Gastrocnemius medialis (tissue), 4 donors: ENCODE measurements at regions of chr6 and their contacts with region 1.

Region 1: GRCh38 chr6:170265655-170266054 is 25.2 kb downstream of the DLL1 start:
- DNase-seq: peak; percentile 80 to 87
- ATAC-seq: peak; percentile 83 to 87
- H3K4me3 ChIP-seq: peak overlapping the region in 3 of 4 donors; percentile 11 to 32 (median 21)
- H3K27ac ChIP-seq: peak overlapping the region; percentile 64 to 70 (median 68)
- H3K4me1 ChIP-seq: peaks cover 8 to 18% of the 10 kb centered on the region in 2 donors
- H3K27me3 ChIP-seq: no peaks in the 10 kb centered on the region
- CTCF ChIP-seq: peak in 3 of 5 experiments; percentile 18 to 36 (median 34)
- POLR2A ChIP-seq: peak; percentile 34 to 62

Region 2: GRCh38 chr6:170039156-170040107 is 226.2 kb before region 1 on chr6:
- in situ Hi-C with region 1: no loop called
- intact Hi-C with region 1: loop called (anchors 5 kb)
- DNase-seq: peak in 1 of 2 donors; percentile 3
- ATAC-seq: no peak
- H3K4me3 ChIP-seq: no peak overlapping the region
- H3K27ac ChIP-seq: no peak overlapping the region
- H3K4me1 ChIP-seq: peaks cover 16 to 30% of the 10 kb centered on the region in 2 donors
- H3K27me3 ChIP-seq: no peaks in the 10 kb centered on the region
- CTCF ChIP-seq: no peak
- POLR2A ChIP-seq: no peak

Region 3: DNA sequence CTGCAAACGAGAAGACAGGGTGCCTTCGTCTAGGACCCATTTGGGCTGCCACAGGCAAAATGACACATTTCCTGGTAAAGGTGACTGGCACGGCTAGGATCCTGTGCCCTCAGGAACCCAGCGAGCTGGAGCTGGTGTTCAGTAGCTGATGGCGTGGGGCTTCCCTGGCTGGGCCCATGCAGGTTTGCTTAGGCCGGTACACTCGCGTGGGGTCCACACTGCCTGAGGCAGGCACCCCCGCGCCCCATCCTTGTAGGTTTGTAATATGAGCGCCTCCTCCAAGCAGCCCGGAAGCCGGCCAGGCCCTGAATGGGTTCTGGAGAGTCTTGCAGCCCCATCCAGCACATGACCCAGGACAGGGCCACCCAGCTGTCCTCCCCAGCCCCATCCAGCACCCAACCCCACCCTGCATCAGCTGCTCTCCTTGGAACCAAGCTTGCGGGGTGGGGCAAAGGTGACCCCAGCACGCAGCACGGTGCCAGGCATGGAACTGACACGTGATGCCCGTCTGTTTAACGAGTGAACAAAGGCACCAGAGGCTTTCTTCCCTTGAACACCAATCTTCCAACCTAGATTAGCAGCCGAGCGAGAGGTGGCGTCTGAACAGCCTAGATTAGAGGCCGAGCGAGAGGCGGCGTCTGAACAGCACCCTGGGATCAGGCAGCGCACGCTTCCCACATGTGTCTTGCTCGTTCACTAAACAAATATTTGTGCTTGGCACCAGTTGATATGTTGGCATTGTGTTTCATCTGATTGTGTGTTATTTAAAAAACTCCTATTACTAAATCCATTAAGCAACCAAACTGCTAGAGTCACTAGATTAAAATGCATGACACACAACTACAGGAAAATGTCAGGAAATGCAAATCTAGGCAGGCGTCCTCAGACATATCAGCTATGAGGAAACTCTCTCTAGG is 86.8 kb before region 1 on chr6:
- in situ Hi-C with region 1: no loop called
- intact Hi-C with region 1: loop called (anchors 5 kb)
- DNase-seq: peak; percentile 75 to 82
- ATAC-seq: peak; percentile 67 to 81
- H3K4me3 ChIP-seq: no peak overlapping the region
- H3K27ac ChIP-seq: peak overlapping the region; percentile 28 to 77 (median 60)
- H3K4me1 ChIP-seq: peaks cover 23 to 26% of the 10 kb centered on the region in 2 donors
- H3K27me3 ChIP-seq: no peaks in the 10 kb centered on the region
- CTCF ChIP-seq: no peak
- POLR2A ChIP-seq: no peak

Region 4: DNA sequence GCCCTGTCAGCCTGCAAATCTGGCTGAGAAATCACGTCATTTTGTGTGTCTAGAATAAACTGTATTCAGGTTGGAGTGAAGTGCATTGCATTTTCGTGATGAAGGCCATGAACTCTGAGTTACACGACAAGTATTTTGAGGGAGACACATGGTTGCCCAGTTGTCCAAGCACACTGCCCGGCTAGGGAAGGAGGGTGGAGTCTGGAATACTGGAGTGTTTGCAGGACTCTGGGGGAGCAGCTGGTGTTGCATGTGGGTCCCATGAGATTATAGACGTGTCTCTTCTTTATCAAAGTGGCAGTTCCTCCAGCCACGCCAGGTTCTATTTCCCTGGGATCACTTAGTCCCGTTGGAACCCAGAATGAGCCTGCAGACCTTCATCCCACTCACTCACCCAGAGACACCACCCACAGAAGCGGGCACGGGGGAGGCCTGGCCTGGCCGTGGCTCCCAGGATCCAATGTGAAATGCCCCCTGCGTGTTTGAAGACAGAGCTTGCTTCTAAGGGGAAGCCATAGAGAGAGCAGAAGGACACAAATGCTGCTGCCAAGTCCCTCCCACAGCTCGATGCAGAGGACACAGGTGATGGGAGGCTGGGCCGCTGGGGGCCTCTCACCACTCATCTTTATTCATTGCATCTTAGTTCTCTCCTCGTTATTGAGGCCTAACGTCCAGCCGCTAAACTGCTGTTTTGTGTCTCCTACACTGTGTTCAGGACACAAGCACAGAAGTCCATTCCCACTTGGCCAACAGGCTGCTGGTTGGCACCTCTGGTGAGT is 34.7 kb before region 1 on chr6:
- in situ Hi-C with region 1: no loop called
- intact Hi-C with region 1: loop called (anchors 1 kb)
- DNase-seq: no peak
- ATAC-seq: peak; percentile 20 to 45
- H3K4me3 ChIP-seq: peak overlapping the region in 1 of 4 donors; percentile 25
- H3K27ac ChIP-seq: peak overlapping the region in 2 of 4 donors; percentile 23 to 56
- H3K4me1 ChIP-seq: peaks cover 22 to 32% of the 10 kb centered on the region in 2 donors
- H3K27me3 ChIP-seq: no peaks in the 10 kb centered on the region
- CTCF ChIP-seq: no peak
- POLR2A ChIP-seq: no peak

Region 5: GRCh38 chr6:170279977-170280688 is 14.5 kb after region 1 on chr6:
- in situ Hi-C with region 1: no loop called
- intact Hi-C with region 1: loop called (anchors 1 kb)
- DNase-seq: peak; percentile 66 to 85
- ATAC-seq: peak; percentile 89 to 92
- H3K4me3 ChIP-seq: peak overlapping the region; percentile 33 to 58 (median 44)
- H3K27ac ChIP-seq: peak overlapping the region; percentile 86 to 90 (median 88)
- H3K4me1 ChIP-seq: peaks cover 22 to 26% of the 10 kb centered on the region in 2 donors
- H3K27me3 ChIP-seq: no peaks in the 10 kb centered on the region
- CTCF ChIP-seq: peak in 1 of 5 experiments; percentile 20
- POLR2A ChIP-seq: peak in 1 of 2 donors; percentile 22